ENCODE measurements at regions of chr13 and their contacts with region 1.

Region 1: GRCh38 chr13:37134411-37135041 is 29.1 kb upstream of the CSNK1A1L start:
- DNase-seq: no peak
- ATAC-seq: no peak
- H3K4me3 ChIP-seq: no peak overlapping the region
- H3K4me3 Mint-ChIP-seq: no peak overlapping the region
- H3K27ac ChIP-seq: no peak overlapping the region
- H3K27ac Mint-ChIP-seq: no peak overlapping the region
- H3K4me1 ChIP-seq: no peaks in the 10 kb centered on the region
- H3K4me1 Mint-ChIP-seq: no peaks in the 10 kb centered on the region
- H3K27me3 ChIP-seq: no peaks in the 10 kb centered on the region
- H3K27me3 Mint-ChIP-seq: no peaks in the 10 kb centered on the region
- CTCF ChIP-seq: no peak

Region 2: GRCh38 chr13:36999054-36999714 is 135.3 kb before region 1 on chr13 and contains the start of gene ALG5:
- CTCF ChIA-PET with region 1: no interaction called
- POLR2A ChIA-PET with region 1: no interaction called
- intact Hi-C with region 1: no loop called
- DNase-seq: peak; percentile 94
- ATAC-seq: peak; percentile 76
- H3K4me3 ChIP-seq: peak within 1 kb of the TSS; percentile 89 to 100 (median 97)
- H3K4me3 Mint-ChIP-seq: peak within 1 kb of the TSS; percentile 100
- H3K27ac ChIP-seq: peak within 1 kb of the TSS; percentile 97 to 98
- H3K27ac Mint-ChIP-seq: peak within 1 kb of the TSS; percentile 100
- H3K4me1 ChIP-seq: peaks cover 15 to 16% of the 10 kb centered on the region in 2 donors
- H3K4me1 Mint-ChIP-seq: peaks cover 38% of the 10 kb centered on the region
- H3K27me3 ChIP-seq: no peaks in the 10 kb centered on the region
- H3K27me3 Mint-ChIP-seq: no peaks in the 10 kb centered on the region
- CTCF ChIP-seq: peak; percentile 98
- total RNA-seq, gene ALG5: 16.4 and 21.0 TPM in 2 replicates

Region 3: GRCh38 chr13:37097076-37097475 is 37.5 kb before region 1 on chr13:
- CTCF ChIA-PET with region 1: no interaction called
- POLR2A ChIA-PET with region 1: no interaction called
- intact Hi-C with region 1: loop called (anchors 1 kb)
- DNase-seq: no peak
- ATAC-seq: no peak
- H3K4me3 ChIP-seq: no peak overlapping the region
- H3K4me3 Mint-ChIP-seq: no peak overlapping the region
- H3K27ac ChIP-seq: no peak overlapping the region
- H3K27ac Mint-ChIP-seq: no peak overlapping the region
- H3K4me1 ChIP-seq: no peaks in the 10 kb centered on the region
- H3K4me1 Mint-ChIP-seq: no peaks in the 10 kb centered on the region
- H3K27me3 ChIP-seq: peaks cover 0 to 2% (median 0%) of the 10 kb centered on the region in 4 experiments
- H3K27me3 Mint-ChIP-seq: peaks cover 6% of the 10 kb centered on the region
- CTCF ChIP-seq: no peak

Region 4: DNA sequence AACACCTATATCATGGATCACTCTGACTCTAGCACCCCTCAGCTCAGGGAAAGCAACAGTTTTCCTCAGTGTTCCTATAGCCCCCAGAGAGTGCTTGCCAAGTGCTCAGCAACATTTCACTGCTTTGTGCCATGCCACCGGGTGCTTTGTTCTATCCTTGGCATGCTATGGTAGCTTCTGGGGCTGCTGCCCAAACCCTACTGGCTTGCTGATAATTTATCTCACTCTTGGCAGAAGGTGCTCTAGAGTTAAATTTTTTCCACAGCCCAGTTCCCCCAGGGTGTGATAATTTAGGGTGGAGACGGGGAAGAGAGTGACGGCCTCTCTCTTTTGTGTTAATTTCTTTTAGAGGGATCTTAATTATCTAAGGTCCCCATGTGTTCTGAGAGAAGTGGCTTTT is 16.5 kb before region 1 on chr13:
- CTCF ChIA-PET with region 1: no interaction called
- POLR2A ChIA-PET with region 1: no interaction called
- intact Hi-C with region 1: no loop called
- DNase-seq: no peak
- ATAC-seq: no peak
- H3K4me3 ChIP-seq: no peak overlapping the region
- H3K4me3 Mint-ChIP-seq: no peak overlapping the region
- H3K27ac ChIP-seq: no peak overlapping the region
- H3K27ac Mint-ChIP-seq: no peak overlapping the region
- H3K4me1 ChIP-seq: no peaks in the 10 kb centered on the region
- H3K4me1 Mint-ChIP-seq: peaks cover 6% of the 10 kb centered on the region
- H3K27me3 ChIP-seq: no peaks in the 10 kb centered on the region
- H3K27me3 Mint-ChIP-seq: peaks cover 16% of the 10 kb centered on the region
- CTCF ChIP-seq: no peak

Measured in B cell (primary cell).